ENCODE measurements at regions of chr9 and their contacts with region 1.

Region 1: GRCh38 chr9:20356403-20357035 is 265.8 kb downstream of the MLLT3 start:
- DNase-seq: peak; percentile 29
- H3K4me3 Mint-ChIP-seq: no peak overlapping the region
- H3K27ac Mint-ChIP-seq: peak overlapping the region; percentile 40
- H3K4me1 Mint-ChIP-seq: peaks cover 86% of the 10 kb centered on the region
- H3K27me3 Mint-ChIP-seq: no peaks in the 10 kb centered on the region

Region 2: DNA sequence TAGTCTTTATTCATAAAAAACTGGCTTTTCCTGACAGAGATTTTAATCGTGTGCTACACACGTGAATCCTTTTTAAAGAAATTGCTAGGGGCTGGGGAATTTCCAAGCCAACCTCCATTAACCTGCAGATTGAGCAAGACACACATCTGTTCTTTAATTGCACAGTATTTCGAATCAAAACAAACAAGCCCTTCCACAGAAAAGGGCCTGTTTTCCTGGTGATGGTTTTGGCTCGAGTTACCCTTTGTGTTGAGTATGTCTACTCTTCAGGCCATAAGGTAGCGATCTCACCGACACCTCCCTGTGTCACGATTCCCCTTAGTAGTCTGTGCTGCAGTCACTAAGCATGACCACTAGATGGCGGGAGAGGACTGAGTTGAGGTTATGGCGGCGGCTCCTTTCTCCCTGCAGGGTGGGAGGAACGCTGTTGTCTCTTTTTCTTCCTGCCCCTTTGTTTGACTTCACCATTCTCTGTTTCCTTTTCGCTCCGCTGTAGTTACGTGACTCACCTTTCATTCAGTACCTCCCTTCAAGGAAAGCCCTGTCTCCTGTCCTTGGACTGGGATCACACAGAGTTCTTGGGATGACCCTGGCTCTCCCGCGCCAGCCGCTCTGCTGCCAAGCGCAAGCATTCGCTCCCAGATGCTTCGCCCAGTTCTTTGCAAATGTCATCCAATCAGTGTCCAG is 430.6 kb before region 1 on chr9:
- intact Hi-C with region 1: loop called (anchors 1 kb)
- DNase-seq: peak; percentile 79
- H3K4me3 Mint-ChIP-seq: peak overlapping the region; percentile 65
- H3K27ac Mint-ChIP-seq: peak overlapping the region; percentile 2
- H3K4me1 Mint-ChIP-seq: peaks cover 28% of the 10 kb centered on the region
- H3K27me3 Mint-ChIP-seq: peaks cover 2% of the 10 kb centered on the region

Region 3: DNA sequence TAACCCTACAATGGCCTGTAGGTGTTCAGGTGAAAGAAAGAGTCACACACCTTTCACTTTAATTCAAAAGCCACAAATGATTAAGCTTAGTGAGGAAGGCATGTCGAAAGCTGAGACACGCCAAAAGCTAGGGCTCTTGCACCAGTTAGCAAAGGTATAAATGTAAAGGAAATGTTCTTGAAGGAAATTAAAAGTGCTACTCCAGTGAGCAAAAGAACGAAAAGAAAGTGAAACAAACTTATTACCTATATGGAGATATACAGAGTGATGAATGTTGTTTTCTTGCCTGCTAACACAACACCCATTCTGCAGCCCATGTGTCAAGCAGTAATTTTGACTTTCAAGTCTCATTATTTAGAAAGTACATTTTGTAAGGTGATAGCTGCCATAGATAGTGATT is 313.5 kb before region 1 on chr9:
- intact Hi-C with region 1: loop called (anchors 2 kb)
- DNase-seq: no peak
- H3K4me3 Mint-ChIP-seq: peak overlapping the region; percentile 78
- H3K27ac Mint-ChIP-seq: peak overlapping the region; percentile 79
- H3K4me1 Mint-ChIP-seq: peaks cover 45% of the 10 kb centered on the region
- H3K27me3 Mint-ChIP-seq: no peaks in the 10 kb centered on the region

Region 4: GRCh38 chr9:20331095-20331685 is 25.3 kb before region 1 on chr9:
- intact Hi-C with region 1: loop called (anchors 1 kb)
- DNase-seq: no peak
- H3K4me3 Mint-ChIP-seq: no peak overlapping the region
- H3K27ac Mint-ChIP-seq: peak overlapping the region; percentile 69
- H3K4me1 Mint-ChIP-seq: peaks cover 37% of the 10 kb centered on the region
- H3K27me3 Mint-ChIP-seq: peaks cover 2% of the 10 kb centered on the region

Region 5: DNA sequence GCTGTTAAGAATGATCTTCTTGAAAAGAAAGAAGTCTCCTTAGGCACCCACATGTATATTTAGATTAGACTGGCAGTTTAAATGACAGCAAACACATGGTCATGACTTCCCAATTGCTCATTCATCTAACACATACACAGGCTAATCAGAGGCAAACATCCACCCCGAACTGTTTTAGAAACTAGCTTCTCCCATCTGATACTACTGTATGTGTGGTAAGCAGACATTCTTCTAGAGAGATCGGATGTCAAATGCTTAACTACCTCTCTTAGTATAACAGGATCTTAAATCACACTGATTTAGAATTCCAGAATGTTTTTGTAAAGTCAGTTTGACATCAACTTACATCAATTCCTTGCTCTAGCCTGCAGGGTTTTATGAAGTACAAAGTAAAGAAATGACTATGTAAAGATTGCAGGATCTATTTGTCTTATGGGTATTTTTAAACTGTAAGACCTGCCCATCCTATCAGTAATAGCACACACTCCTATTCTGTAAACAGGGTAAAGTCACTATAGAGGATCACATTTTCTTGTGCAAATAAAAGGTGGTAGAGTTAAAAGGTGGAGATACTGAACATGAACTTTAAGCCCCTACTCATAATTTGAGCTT is 26.0 kb after region 1 on chr9:
- intact Hi-C with region 1: no loop called
- DNase-seq: no peak
- H3K4me3 Mint-ChIP-seq: no peak overlapping the region
- H3K27ac Mint-ChIP-seq: no peak overlapping the region
- H3K4me1 Mint-ChIP-seq: peaks cover 40% of the 10 kb centered on the region
- H3K27me3 Mint-ChIP-seq: no peaks in the 10 kb centered on the region

Region 6: GRCh38 chr9:20684035-20684872 is 327.7 kb after region 1 on chr9 and contains the start of gene FOCAD:
- intact Hi-C with region 1: loop called (anchors 1 kb)
- DNase-seq: peak; percentile 96
- H3K4me3 Mint-ChIP-seq: peak within 1 kb of the TSS; percentile 89
- H3K27ac Mint-ChIP-seq: peak within 1 kb of the TSS; percentile 79
- H3K4me1 Mint-ChIP-seq: peaks cover 33% of the 10 kb centered on the region
- H3K27me3 Mint-ChIP-seq: no peaks in the 10 kb centered on the region
- total RNA-seq, gene FOCAD: 31.2 and 33.7 TPM in 2 replicates

Region 7: GRCh38 chr9:20980832-20981455 is 624.4 kb after region 1 on chr9:
- intact Hi-C with region 1: no loop called
- DNase-seq: no peak
- H3K4me3 Mint-ChIP-seq: no peak overlapping the region
- H3K27ac Mint-ChIP-seq: no peak overlapping the region
- H3K4me1 Mint-ChIP-seq: no peaks in the 10 kb centered on the region
- H3K27me3 Mint-ChIP-seq: no peaks in the 10 kb centered on the region

Region 8: GRCh38 chr9:21031091-21031807 is 674.7 kb after region 1 on chr9 and contains the start of gene HACD4:
- intact Hi-C with region 1: loop called (anchors 5 kb)
- DNase-seq: peak; percentile 67
- H3K4me3 Mint-ChIP-seq: peak within 1 kb of the TSS; percentile 63
- H3K27ac Mint-ChIP-seq: peak within 1 kb of the TSS; percentile 27
- H3K4me1 Mint-ChIP-seq: peaks cover 23% of the 10 kb centered on the region
- H3K27me3 Mint-ChIP-seq: no peaks in the 10 kb centered on the region
- total RNA-seq, gene HACD4: 2.7 and 3.0 TPM in 2 replicates